Mammary epithelial cell (primary cell): ENCODE measurements at regions of chr10 and their contacts with region 1.

Region 1: DNA sequence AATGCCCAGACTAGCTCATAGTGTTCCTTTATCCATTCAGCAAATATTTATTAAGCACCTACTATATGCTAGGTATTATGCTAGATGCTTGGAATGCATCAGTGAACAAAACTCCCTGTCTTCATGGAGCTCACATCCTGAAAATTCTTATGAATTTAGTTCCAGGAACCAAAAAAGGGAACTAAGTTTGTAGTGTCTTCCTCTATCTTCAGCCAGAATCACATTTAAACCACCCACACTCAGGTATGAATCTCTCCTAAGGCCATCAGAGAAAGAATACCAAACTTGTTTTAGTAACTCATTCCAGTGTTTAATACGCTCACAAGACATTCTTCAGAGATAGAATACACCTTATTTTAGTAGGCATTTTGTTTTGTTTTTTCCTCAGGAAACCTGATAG is 10.1 kb upstream of the EGR2 start:
- DNase-seq: no peak
- H3K4me3 ChIP-seq: no peak overlapping the region
- H3K27ac ChIP-seq: no peak overlapping the region
- H3K4me1 ChIP-seq: no peaks in the 10 kb centered on the region
- H3K27me3 ChIP-seq: no peaks in the 10 kb centered on the region
- CTCF ChIP-seq: no peak

Region 2: DNA sequence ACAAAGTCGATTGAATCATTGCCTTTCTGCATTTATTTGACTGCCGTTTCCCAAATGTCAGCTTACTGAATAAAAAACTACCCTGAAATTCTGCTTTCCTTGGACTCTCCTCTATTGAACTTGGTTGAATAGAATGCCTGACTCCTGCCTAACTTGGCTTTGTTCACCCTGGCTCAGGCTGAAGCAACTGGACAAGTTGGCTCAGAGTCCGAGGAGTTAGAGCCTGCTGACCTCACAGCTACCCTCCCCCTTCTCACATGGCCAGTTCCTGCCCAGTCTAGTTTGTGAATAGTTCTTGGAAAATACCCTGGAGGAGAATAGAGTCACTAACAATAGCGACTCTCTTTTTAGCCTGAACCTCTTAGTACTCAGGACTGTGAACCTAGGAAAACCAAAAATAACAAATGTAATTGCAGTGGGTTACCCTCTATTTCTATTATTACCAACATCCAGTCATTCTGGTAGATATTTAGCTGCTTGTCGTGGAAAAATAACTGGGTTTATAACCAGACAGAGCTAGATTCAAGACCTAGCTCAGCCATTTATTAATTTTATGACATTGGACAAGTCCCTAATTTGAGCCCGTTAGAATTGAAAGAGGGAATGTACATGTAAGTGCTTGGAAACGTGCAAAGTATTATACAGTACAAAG is 289.6 kb after region 1 on chr10:
- CTCF ChIA-PET with region 1: no interaction called
- dilution Hi-C with region 1: loop called (anchors 10 kb)
- in situ Hi-C with region 1: no loop called
- intact Hi-C with region 1: no loop called
- DNase-seq: peak; percentile 94
- H3K4me3 ChIP-seq: no peak overlapping the region
- H3K27ac ChIP-seq: peak overlapping the region; percentile 60
- H3K4me1 ChIP-seq: peaks cover 19% of the 10 kb centered on the region
- H3K27me3 ChIP-seq: no peaks in the 10 kb centered on the region
- CTCF ChIP-seq: no peak

Region 3: GRCh38 chr10:63629363-63630084 is 803.3 kb after region 1 on chr10:
- CTCF ChIA-PET with region 1: no interaction called
- dilution Hi-C with region 1: no loop called
- in situ Hi-C with region 1: no loop called
- intact Hi-C with region 1: no loop called
- DNase-seq: peak; percentile 97
- H3K4me3 ChIP-seq: peak overlapping the region; percentile 43 to 72 (median 63)
- H3K27ac ChIP-seq: peak overlapping the region; percentile 97
- H3K4me1 ChIP-seq: peaks cover 30% of the 10 kb centered on the region
- H3K27me3 ChIP-seq: no peaks in the 10 kb centered on the region
- CTCF ChIP-seq: peak; percentile 86 to 87